Activated CD4-positive, alpha-beta T cell treated with anti-CD3 and anti-CD28 coated beads for 36 hours (primary cell): ENCODE measurements at regions of chr4 and their contacts with region 1.

Region 1: DNA sequence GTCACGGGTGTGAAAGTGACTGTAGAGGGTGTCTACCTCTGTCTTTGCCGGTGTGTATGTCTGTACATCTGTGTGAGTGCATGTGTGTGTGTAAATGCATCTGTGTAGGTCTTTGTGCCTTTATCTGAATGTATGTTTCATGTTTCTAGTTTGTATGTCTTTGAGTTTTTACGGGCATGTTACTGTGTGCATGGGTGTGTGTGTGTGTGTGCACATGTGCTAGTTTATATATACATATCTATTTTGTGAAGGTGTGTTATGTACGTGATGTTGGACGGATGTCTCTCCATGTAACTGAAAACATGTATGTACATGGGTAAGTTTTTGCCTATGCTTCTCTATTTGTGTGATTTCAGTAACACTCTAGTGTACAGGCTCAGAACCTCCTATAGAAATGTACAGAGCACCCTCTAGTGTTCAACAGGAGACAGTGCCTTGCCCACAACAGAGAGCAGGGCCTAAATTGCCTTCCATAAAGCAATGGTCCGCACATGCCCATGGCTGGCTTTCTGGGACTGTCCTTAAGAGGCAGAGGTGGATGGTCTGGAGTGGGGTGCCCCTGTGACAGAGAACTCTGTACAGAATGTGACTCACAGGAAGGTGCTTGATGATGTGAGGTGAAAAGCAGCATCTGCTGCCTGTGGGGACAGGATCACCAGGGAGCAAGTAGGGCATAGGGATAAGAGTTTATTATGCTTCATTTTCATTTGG is 343.5 kb downstream of the RAPGEF2 start:
- DNase-seq: peak; percentile 43
- ATAC-seq: peak; percentile 94
- H3K4me3 Mint-ChIP-seq: no peak overlapping the region
- H3K27ac Mint-ChIP-seq: no peak overlapping the region
- H3K4me1 Mint-ChIP-seq: no peaks in the 10 kb centered on the region
- H3K27me3 Mint-ChIP-seq: peaks cover 14% of the 10 kb centered on the region

Region 2: DNA sequence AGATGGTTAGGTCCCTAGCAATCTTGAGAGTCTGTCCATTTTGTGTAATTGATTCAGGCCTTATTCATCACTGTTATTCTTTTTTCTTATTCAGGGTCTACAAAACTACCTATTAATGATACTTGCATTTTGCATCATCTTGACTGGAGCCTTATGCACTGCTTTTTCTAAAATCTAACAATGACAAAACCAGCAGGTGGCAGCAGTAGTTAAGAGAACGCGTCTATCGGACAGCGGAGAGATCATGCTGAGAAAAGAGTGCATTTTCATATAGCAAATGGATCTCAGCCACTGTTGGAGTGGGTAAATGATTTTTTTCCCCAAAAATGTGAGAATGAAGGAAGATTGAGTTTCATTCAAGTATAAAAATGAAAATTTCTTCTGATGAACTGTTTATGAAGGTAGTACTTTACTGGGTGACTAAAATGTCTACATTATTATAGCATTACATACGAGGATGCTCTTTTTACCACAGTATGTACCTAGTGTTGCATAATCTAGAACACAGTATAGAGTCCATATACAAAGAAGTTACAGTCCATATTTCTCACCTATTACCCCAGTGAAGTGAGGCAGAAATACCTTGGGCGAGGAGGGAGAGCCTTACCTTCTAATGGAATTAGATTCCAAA is 1193.0 kb before region 1 on chr4:
- CTCF ChIA-PET with region 1: no interaction called
- POLR2A ChIA-PET with region 1: no interaction called
- intact Hi-C with region 1: loop called in 1 of 2 experiments (anchors 2 kb)
- DNase-seq: peak; percentile 65
- ATAC-seq: peak; percentile 73
- H3K4me3 Mint-ChIP-seq: no peak overlapping the region
- H3K27ac Mint-ChIP-seq: no peak overlapping the region
- H3K4me1 Mint-ChIP-seq: no peaks in the 10 kb centered on the region
- H3K27me3 Mint-ChIP-seq: peaks cover 6% of the 10 kb centered on the region

Region 3: DNA sequence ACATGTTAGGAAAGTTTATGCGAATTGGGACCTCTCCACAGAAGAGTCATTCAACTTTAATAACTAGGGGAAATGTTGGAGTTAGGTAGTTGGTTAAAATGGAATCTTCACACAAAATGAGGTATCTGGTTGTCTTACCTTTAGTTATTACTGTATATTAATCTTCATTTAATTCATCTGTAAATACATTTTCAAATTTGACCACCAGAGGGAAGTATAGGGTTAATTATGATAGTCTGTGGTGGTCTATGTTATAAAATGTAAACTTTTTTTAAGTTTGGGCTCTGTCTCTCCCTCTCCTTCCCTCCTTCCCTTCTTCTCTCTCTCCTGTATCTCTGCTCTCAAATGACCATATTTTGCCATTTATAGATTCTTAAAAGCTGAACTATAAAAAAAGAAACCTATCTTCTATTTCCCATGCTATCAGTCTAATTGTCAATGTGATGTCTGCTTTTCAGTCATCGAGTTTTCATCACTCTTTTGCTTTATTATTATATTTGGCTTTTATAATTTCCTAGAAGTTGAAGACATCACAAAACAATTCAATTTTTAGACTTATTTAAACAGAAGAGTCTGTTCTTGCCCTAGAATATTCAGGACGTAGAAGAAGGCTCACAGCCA is 1186.4 kb before region 1 on chr4:
- CTCF ChIA-PET with region 1: no interaction called
- POLR2A ChIA-PET with region 1: no interaction called
- intact Hi-C with region 1: loop called (anchors 2 to 5 kb)
- DNase-seq: no peak
- ATAC-seq: no peak
- H3K4me3 Mint-ChIP-seq: no peak overlapping the region
- H3K27ac Mint-ChIP-seq: no peak overlapping the region
- H3K4me1 Mint-ChIP-seq: no peaks in the 10 kb centered on the region
- H3K27me3 Mint-ChIP-seq: peaks cover 7% of the 10 kb centered on the region

Region 4: GRCh38 chr4:158856852-158857251 is 589.6 kb before region 1 on chr4:
- CTCF ChIA-PET with region 1: no interaction called
- POLR2A ChIA-PET with region 1: no interaction called
- intact Hi-C with region 1: loop called (anchors 2 to 5 kb)
- DNase-seq: no peak
- ATAC-seq: peak; percentile 87
- H3K4me3 Mint-ChIP-seq: no peak overlapping the region
- H3K27ac Mint-ChIP-seq: no peak overlapping the region
- H3K4me1 Mint-ChIP-seq: peaks cover 2% of the 10 kb centered on the region
- H3K27me3 Mint-ChIP-seq: no peaks in the 10 kb centered on the region

Region 5: GRCh38 chr4:159175085-159175988 is 271.1 kb before region 1 on chr4:
- CTCF ChIA-PET with region 1: no interaction called
- POLR2A ChIA-PET with region 1: no interaction called
- intact Hi-C with region 1: loop called in 1 of 2 experiments (anchors 5 kb)
- DNase-seq: peak; percentile 71
- ATAC-seq: peak; percentile 69
- H3K4me3 Mint-ChIP-seq: no peak overlapping the region
- H3K27ac Mint-ChIP-seq: no peak overlapping the region
- H3K4me1 Mint-ChIP-seq: peaks cover 68% of the 10 kb centered on the region
- H3K27me3 Mint-ChIP-seq: no peaks in the 10 kb centered on the region

Region 6: GRCh38 chr4:159201168-159201567 is 245.3 kb before region 1 on chr4:
- CTCF ChIA-PET with region 1: no interaction called
- POLR2A ChIA-PET with region 1: no interaction called
- intact Hi-C with region 1: loop called (anchors 2 to 5 kb)
- DNase-seq: no peak
- ATAC-seq: no peak
- H3K4me3 Mint-ChIP-seq: no peak overlapping the region
- H3K27ac Mint-ChIP-seq: no peak overlapping the region
- H3K4me1 Mint-ChIP-seq: peaks cover 27% of the 10 kb centered on the region
- H3K27me3 Mint-ChIP-seq: no peaks in the 10 kb centered on the region

Region 7: DNA sequence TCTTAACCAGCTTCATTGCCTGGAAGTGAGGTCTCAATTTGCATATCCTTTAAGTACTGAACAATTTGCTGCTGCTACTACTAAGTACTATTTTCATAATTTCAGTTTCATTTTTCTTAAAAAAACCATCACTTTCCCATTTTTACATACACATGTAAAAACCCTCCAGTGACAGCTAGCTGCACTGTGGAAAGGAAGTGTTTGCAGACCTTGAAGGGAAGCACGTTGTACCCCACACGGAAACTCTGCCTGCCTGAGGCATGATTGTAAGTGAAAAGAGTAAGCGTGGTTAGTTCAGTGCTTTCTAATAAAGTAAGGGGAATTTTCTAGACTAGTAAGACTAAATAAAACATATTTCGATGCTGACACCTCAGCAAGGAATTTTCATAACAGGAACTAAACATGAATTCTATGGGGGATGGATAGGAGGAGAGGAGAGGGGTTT is 240.0 kb before region 1 on chr4:
- CTCF ChIA-PET with region 1: no interaction called
- POLR2A ChIA-PET with region 1: no interaction called
- intact Hi-C with region 1: loop called (anchors 2 to 5 kb)
- DNase-seq: peak; percentile 76
- ATAC-seq: peak; percentile 94
- H3K4me3 Mint-ChIP-seq: peak overlapping the region; percentile 62
- H3K27ac Mint-ChIP-seq: peak overlapping the region; percentile 89
- H3K4me1 Mint-ChIP-seq: peaks cover 52% of the 10 kb centered on the region
- H3K27me3 Mint-ChIP-seq: no peaks in the 10 kb centered on the region

Region 8: DNA sequence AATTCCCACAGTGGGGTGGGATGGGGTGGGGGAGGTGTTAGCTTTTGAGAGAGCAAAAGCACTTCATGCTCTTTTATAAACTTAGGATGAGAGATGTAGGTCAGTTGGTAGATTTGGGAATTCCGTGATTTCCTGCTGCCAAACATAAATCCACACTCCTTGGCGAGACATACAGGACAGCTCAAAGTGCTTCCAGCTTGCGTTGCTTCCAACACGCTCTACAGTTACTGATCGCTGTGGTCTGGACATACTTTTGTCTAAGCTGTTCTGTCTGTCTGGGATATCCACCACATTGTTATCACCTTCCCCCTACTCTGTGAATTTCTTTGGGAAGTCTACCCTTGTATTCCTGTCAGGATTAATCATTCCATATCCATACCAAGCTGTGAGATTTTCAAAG is 226.1 kb before region 1 on chr4:
- CTCF ChIA-PET with region 1: no interaction called
- POLR2A ChIA-PET with region 1: no interaction called
- intact Hi-C with region 1: no loop called
- DNase-seq: no peak
- ATAC-seq: no peak
- H3K4me3 Mint-ChIP-seq: no peak overlapping the region
- H3K27ac Mint-ChIP-seq: no peak overlapping the region
- H3K4me1 Mint-ChIP-seq: peaks cover 7% of the 10 kb centered on the region
- H3K27me3 Mint-ChIP-seq: no peaks in the 10 kb centered on the region

Region 9: GRCh38 chr4:159856451-159856850 is 410.0 kb after region 1 on chr4:
- CTCF ChIA-PET with region 1: no interaction called
- POLR2A ChIA-PET with region 1: no interaction called
- intact Hi-C with region 1: no loop called
- DNase-seq: no peak
- ATAC-seq: no peak
- H3K4me3 Mint-ChIP-seq: no peak overlapping the region
- H3K27ac Mint-ChIP-seq: no peak overlapping the region
- H3K4me1 Mint-ChIP-seq: no peaks in the 10 kb centered on the region
- H3K27me3 Mint-ChIP-seq: no peaks in the 10 kb centered on the region